ENCODE measurements at regions of chr17 and their contacts with region 1.

Region 1: DNA sequence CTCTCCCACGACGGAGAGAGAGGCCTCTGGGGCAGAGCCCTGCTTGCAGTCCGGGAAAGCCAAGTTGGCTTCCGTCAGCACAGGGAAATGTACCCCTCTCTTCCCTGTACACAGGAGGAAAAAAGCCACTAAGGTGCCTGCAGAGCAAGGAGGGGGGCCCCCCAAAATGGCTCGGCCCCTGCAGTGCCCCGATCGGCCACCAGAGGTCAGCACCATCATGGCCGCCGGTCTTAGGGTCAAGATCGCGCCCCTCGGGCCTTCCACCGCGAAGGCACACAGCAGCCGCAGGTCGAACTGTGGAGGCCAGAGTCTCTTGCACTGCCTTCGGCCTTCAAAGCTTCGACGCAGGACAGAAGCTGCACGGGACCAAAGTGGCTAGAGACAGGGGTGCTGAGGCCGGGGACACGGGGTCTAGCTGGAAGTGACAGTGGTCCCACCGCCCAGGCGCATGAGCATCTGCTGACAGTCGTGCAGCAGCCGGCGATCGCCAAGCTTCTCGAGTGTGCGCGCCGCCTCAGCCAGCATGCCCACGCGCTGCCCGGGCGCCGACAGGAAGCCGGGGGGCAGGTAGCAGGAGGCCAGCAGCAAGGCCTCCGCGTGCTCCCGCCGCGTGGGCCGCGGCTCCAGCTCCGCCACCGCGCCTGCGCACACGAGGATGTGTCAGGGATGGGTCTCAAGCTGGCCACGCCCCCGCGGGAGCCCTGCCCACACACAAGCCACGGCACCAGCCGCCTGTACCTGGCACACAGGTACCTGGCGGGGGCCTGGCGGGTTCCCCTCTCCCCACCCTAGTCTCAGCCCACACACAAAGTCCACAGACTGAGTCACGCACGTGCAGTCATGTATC is 24.4 kb downstream of the SREBF1 start:
- DNase-seq: peak; percentile 88
- CTCF ChIP-seq: peak; percentile 99

Region 2: DNA sequence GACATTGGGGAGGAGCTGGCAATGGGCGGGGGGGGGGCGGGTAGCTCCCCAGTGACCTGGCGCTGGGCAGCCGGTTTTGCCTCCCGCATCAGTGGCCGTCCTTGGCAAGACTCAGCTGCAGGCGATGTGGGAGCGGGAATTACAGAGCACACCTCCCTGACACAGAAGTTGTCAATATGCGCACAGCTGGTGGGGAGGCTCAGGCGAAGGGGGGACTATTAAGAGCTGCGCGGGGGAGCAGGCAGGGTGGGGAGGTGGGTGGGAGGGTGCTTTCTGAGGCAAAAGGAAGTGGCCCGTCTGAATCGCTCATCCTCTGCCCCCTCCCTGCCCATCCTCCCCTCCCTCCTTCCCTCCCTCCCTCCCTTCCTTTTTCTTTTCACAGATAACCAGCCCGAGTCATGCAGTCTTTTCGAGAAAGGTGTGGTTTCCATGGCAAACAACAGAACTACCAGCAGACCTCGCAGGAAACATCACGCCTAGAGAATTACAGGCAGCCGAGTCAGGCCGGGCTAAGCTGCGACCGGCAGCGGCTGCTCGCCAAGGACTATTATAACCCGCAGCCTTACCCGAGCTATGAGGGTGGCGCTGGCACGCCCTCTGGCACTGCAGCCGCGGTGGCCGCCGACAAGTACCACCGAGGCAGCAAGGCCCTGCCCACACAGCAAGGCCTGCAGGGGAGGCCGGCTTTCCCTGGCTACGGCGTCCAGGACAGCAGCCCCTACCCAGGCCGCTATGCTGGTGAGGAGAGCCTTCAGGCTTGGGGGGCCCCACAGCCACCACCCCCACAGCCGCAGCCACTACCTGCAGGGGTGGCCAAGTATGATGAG is 19.7 kb before region 1 on chr17:
- CTCF ChIA-PET with region 1: interaction called, 22 read pairs
- POLR2A ChIA-PET with region 1: no interaction called
- DNase-seq: peak; percentile 40
- CTCF ChIP-seq: no peak

Region 3: DNA sequence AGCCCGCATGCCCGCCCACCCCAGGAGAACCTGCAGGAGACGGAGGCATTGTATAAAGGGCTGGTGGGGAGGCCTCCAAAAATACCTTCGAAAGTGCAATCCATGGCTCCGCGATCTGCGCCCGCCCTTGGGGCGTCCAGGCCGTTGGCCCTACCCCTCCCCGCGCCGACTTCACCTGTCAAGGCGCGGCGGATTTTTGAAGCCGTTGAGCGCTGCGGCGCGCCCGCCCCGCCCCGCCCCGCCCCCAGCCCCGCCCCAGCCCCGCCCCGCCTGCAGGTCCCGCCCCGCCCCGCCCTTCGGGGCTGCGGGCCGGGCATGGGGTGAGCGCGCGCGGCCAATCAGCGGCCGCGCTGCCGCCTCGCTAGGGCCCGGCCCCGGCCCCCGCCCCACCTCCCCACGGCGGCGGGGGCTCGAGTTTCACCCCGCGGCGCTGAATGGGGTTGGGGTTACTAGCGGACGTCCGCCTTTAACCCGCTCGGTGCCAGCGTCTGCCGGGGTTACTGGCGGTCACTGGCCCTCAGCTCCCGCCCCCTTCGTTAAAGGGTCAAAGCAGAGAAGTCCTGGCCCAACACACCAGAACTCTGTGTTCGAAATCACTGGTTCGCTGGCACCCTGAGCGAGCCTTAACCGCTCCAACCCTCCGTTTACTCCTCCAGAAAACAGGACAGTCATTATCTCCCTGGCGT is 11.1 kb after region 1 on chr17:
- CTCF ChIA-PET with region 1: interaction called, 14 read pairs
- POLR2A ChIA-PET with region 1: no interaction called
- DNase-seq: peak; percentile 99
- CTCF ChIP-seq: no peak

Region 4: GRCh38 chr17:17849845-17850373 is 37.5 kb after region 1 on chr17:
- CTCF ChIA-PET with region 1: interaction called, 31 read pairs
- POLR2A ChIA-PET with region 1: no interaction called
- DNase-seq: peak; percentile 78
- CTCF ChIP-seq: peak; percentile 9

Region 5: DNA sequence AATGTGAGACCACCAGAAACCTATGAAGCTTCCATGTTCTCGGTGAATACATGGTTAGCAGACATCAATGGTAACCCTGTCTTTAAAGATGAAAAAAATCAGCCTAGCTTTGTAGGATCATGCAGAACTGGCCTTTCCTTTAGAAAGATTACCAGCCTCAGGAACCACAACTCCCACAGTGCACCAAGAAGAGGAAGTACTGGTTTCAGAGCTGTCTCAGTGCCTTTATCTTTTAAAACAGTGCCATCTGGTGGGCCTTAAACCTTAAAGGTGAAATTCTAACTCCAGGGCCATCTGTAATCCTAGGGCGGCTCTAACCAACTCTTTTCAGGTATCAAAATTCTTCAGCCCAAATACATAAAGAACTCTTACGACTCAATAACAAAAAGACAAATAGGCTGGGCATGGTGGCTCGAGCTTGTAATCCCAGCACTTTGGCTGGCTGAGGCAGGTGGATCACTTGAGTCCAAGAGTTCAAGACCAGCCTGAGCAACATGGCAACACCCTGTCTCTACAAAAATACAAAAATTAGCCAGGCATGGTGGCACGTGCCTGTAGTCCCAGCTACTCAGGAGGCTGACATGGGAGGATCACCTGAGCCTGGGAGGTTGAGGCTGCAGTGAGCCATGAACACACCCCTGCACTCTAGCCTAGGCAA is 221.1 kb after region 1 on chr17:
- CTCF ChIA-PET with region 1: interaction called, 17 read pairs
- POLR2A ChIA-PET with region 1: no interaction called
- DNase-seq: peak; percentile 80
- CTCF ChIP-seq: peak; percentile 63

Measured in GM10248 (cell line).